ENCODE measurements at regions of chr9 and their contacts with region 1.

Region 1: GRCh38 chr9:93302551-93303257 is 118.8 kb downstream of the WNK2 start:
- DNase-seq: no peak
- H3K4me3 ChIP-seq: no peak overlapping the region
- H3K27ac ChIP-seq: no peak overlapping the region
- H3K4me1 ChIP-seq: peaks cover 77% of the 10 kb centered on the region
- H3K27me3 ChIP-seq: peaks cover 9% of the 10 kb centered on the region
- CTCF ChIP-seq: peak; percentile 67

Region 2: GRCh38 chr9:93159601-93160471 is 142.9 kb before region 1 on chr9:
- intact Hi-C with region 1: loop called (anchors 10 kb)
- DNase-seq: peak; percentile 85
- H3K4me3 ChIP-seq: no peak overlapping the region
- H3K27ac ChIP-seq: no peak overlapping the region
- H3K4me1 ChIP-seq: peaks cover 31% of the 10 kb centered on the region
- H3K27me3 ChIP-seq: no peaks in the 10 kb centered on the region
- CTCF ChIP-seq: peak; percentile 99

Region 3: GRCh38 chr9:93387791-93388190 is 85.1 kb after region 1 on chr9:
- intact Hi-C with region 1: no loop called
- DNase-seq: no peak
- H3K4me3 ChIP-seq: no peak overlapping the region
- H3K27ac ChIP-seq: no peak overlapping the region
- H3K4me1 ChIP-seq: peaks cover 5% of the 10 kb centered on the region
- H3K27me3 ChIP-seq: no peaks in the 10 kb centered on the region
- CTCF ChIP-seq: no peak

Region 4: DNA sequence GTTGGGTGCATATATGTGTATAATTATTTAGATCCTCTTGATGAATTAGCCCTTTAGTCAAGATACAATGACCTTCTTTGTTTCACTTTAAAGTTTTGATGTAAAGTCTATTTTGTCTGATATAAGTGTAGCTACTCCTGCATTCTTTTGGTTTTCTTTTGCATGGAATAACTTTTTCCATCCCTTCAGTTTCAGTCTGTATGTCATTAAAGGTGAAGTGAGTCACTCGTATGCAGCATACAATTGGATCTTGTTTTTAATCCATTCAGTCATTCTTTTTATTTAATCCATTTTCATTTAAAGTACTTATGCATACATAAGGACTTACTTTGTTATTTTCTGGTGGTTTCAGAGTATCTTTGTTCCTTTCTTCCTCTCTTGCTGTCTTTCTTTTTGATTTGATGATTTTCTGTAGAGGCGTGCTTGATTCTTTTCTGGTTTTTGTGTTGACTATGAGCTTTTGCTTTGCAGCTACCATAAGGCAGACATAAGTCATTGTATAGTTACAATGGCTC is 112.5 kb after region 1 on chr9:
- intact Hi-C with region 1: no loop called
- DNase-seq: no peak
- H3K4me3 ChIP-seq: no peak overlapping the region
- H3K27ac ChIP-seq: no peak overlapping the region
- H3K4me1 ChIP-seq: no peaks in the 10 kb centered on the region
- H3K27me3 ChIP-seq: peaks cover 10% of the 10 kb centered on the region
- CTCF ChIP-seq: no peak

Measured in left ventricle myocardium inferior (tissue), 1 donor.